ENCODE measurements at regions of chr2 and their contacts with region 1.

Region 1: GRCh38 chr2:196171248-196171871 is at the start of gene STK17B:
- DNase-seq: peak; percentile 96 to 99 (median 98)
- ATAC-seq: peak; percentile 57
- H3K4me3 ChIP-seq: peak within 1 kb of the TSS; percentile 91
- H3K4me3 Mint-ChIP-seq: peak within 1 kb of the TSS; percentile 99
- H3K27ac ChIP-seq: peak within 1 kb of the TSS; percentile 76 to 99
- H3K27ac Mint-ChIP-seq: peak within 1 kb of the TSS; percentile 85
- H3K4me1 ChIP-seq: peaks cover 40% of the 10 kb centered on the region
- H3K4me1 Mint-ChIP-seq: peaks cover 44% of the 10 kb centered on the region
- H3K27me3 ChIP-seq: no peaks in the 10 kb centered on the region
- H3K27me3 Mint-ChIP-seq: peaks cover 8% of the 10 kb centered on the region
- CTCF ChIP-seq: no peak
- total RNA-seq, gene STK17B: 645 to 648 TPM

Region 2: DNA sequence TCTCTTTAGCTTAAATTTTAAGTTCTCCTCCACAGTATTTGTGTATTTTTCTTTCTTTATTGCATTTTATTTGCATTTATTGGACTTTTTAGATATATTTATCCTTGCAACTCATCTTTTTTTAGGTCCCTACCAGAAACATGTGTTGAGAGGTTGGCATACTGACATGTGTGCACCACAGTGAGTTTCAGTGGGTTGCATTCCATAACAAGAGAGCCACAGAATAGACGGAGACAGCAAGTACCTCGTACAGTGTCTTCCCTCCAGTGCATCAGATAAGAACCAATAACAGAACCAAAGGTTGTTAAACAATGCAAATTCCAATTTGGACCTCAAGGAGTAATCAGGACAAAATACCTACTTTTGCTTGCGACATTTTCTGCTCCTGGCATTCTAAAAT is 214.6 kb before region 1 on chr2:
- CTCF ChIA-PET with region 1: no interaction called
- POLR2A ChIA-PET with region 1: no interaction called
- intact Hi-C with region 1: no loop called
- DNase-seq: no peak
- ATAC-seq: no peak
- H3K4me3 ChIP-seq: no peak overlapping the region
- H3K4me3 Mint-ChIP-seq: no peak overlapping the region
- H3K27ac ChIP-seq: no peak overlapping the region
- H3K27ac Mint-ChIP-seq: no peak overlapping the region
- H3K4me1 ChIP-seq: no peaks in the 10 kb centered on the region
- H3K4me1 Mint-ChIP-seq: no peaks in the 10 kb centered on the region
- H3K27me3 ChIP-seq: no peaks in the 10 kb centered on the region
- H3K27me3 Mint-ChIP-seq: peaks cover 4% of the 10 kb centered on the region
- CTCF ChIP-seq: no peak

Region 3: GRCh38 chr2:196119926-196120325 is 51.4 kb before region 1 on chr2:
- CTCF ChIA-PET with region 1: no interaction called
- POLR2A ChIA-PET with region 1: no interaction called
- intact Hi-C with region 1: no loop called
- DNase-seq: no peak
- ATAC-seq: no peak
- H3K4me3 ChIP-seq: no peak overlapping the region
- H3K4me3 Mint-ChIP-seq: no peak overlapping the region
- H3K27ac ChIP-seq: no peak overlapping the region
- H3K27ac Mint-ChIP-seq: no peak overlapping the region
- H3K4me1 ChIP-seq: no peaks in the 10 kb centered on the region
- H3K4me1 Mint-ChIP-seq: no peaks in the 10 kb centered on the region
- H3K27me3 ChIP-seq: no peaks in the 10 kb centered on the region
- H3K27me3 Mint-ChIP-seq: no peaks in the 10 kb centered on the region
- CTCF ChIP-seq: no peak

Region 4: DNA sequence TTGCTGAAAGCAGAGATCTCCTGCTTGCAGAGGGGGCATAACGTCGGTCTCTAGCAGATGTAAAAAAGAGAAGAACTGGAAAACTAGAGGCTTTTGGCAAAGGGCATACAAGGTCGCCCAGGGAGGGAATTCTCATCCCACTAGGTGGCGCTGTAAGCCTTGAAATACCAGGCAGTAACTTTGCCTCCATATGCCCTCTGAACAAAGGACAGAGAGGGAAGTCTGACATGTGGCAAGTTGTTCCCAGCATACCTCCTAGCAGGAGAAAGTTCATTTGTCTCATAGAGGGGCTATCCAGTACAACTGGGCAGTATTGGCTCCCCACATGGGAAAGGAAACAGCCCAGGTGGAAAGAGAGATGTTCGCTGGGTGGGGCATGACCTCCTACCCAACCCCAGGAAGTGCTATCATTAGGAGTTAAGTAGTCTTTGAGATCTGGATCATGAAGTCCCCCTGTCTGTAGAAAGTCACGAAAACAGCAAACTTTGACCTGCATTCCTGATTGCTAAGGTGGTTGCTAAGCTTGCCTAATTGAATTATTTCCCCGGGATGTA is 39.9 kb before region 1 on chr2:
- CTCF ChIA-PET with region 1: no interaction called
- POLR2A ChIA-PET with region 1: interaction called, 24 read pairs
- intact Hi-C with region 1: loop called in 1 of 2 experiments (anchors 5 kb)
- DNase-seq: peak in 12 of 14 experiments; percentile 33 to 81 (median 50)
- ATAC-seq: peak; percentile 28
- H3K4me3 ChIP-seq: no peak overlapping the region
- H3K4me3 Mint-ChIP-seq: peak overlapping the region; percentile 3
- H3K27ac ChIP-seq: peak overlapping the region in 1 of 2 donors; percentile 27
- H3K27ac Mint-ChIP-seq: peak overlapping the region; percentile 77
- H3K4me1 ChIP-seq: peaks cover 8% of the 10 kb centered on the region
- H3K4me1 Mint-ChIP-seq: peaks cover 23% of the 10 kb centered on the region
- H3K27me3 ChIP-seq: no peaks in the 10 kb centered on the region
- H3K27me3 Mint-ChIP-seq: no peaks in the 10 kb centered on the region
- CTCF ChIP-seq: peak; percentile 55

Region 5: DNA sequence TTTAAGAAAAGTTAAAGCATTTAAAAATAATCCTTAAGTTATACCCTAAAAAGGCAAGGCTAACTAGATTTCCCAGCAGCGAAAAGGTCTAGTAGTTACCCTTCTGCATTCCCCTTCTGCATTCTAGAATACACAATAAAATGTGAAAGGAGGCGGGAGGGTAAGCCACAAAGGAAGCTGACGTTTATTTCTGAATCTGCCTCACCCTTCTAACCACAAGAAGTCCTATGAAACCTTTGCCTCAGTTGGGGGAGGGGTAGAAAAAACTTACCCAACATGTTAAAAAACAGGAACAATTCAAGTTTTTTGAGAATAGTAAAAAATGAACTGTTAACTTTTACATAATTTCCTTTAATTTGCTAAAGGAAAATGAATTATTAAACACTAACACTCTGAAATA is 11.3 kb before region 1 on chr2:
- CTCF ChIA-PET with region 1: no interaction called
- POLR2A ChIA-PET with region 1: interaction called, 126 read pairs
- intact Hi-C with region 1: loop called in 1 of 2 experiments (anchors 1 kb)
- DNase-seq: peak in 9 of 14 experiments; percentile 21 to 94 (median 58)
- ATAC-seq: peak; percentile 54
- H3K4me3 ChIP-seq: peak overlapping the region; percentile 91
- H3K4me3 Mint-ChIP-seq: peak overlapping the region; percentile 86
- H3K27ac ChIP-seq: peak overlapping the region; percentile 80 to 88
- H3K27ac Mint-ChIP-seq: peak overlapping the region; percentile 85
- H3K4me1 ChIP-seq: peaks cover 32% of the 10 kb centered on the region
- H3K4me1 Mint-ChIP-seq: peaks cover 92% of the 10 kb centered on the region
- H3K27me3 ChIP-seq: no peaks in the 10 kb centered on the region
- H3K27me3 Mint-ChIP-seq: no peaks in the 10 kb centered on the region
- CTCF ChIP-seq: no peak

Region 6: DNA sequence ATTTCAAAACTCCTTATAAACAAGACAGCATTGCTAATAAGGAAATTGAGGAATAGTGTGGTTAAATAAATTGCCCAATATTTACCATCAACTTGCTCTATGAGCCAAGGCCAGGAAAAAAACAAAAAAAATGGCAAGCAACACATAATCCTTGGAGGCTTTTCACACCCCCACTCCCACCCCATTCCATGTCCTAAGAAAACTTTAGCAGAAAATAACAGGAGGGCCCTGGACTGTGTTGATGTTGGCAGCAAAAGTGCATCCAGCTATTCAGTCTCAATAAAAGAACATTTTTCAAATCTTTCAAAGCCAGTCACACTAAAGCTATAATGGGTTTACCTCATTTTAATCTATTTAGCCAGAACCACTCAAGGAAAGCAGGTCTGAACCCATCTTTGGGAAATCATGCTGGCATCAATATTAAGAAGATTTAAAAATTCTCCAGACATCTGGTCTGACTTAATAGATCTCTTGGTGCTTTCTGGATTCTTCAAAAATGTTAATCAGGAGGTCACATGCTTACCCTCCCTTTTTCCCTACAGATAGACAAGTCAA is 34.6 kb after region 1 on chr2:
- CTCF ChIA-PET with region 1: interaction called, 9 read pairs
- POLR2A ChIA-PET with region 1: interaction called, 75 read pairs
- intact Hi-C with region 1: loop called in 1 of 2 experiments (anchors 1 kb)
- DNase-seq: no peak
- ATAC-seq: no peak
- H3K4me3 ChIP-seq: no peak overlapping the region
- H3K4me3 Mint-ChIP-seq: no peak overlapping the region
- H3K27ac ChIP-seq: no peak overlapping the region
- H3K27ac Mint-ChIP-seq: peak overlapping the region; percentile 43
- H3K4me1 ChIP-seq: peaks cover 34% of the 10 kb centered on the region
- H3K4me1 Mint-ChIP-seq: peaks cover 45% of the 10 kb centered on the region
- H3K27me3 ChIP-seq: no peaks in the 10 kb centered on the region
- H3K27me3 Mint-ChIP-seq: no peaks in the 10 kb centered on the region
- CTCF ChIP-seq: no peak

Region 7: GRCh38 chr2:196239622-196240587 is 68.5 kb after region 1 on chr2:
- CTCF ChIA-PET with region 1: interaction called, 4 read pairs
- POLR2A ChIA-PET with region 1: interaction called, 60 read pairs
- intact Hi-C with region 1: loop called in 1 of 2 experiments (anchors 1 kb)
- DNase-seq: peak; percentile 57 to 95 (median 73)
- ATAC-seq: peak; percentile 80
- H3K4me3 ChIP-seq: peak overlapping the region; percentile 13
- H3K4me3 Mint-ChIP-seq: peak overlapping the region; percentile 83
- H3K27ac ChIP-seq: peak overlapping the region; percentile 54 to 76
- H3K27ac Mint-ChIP-seq: peak overlapping the region; percentile 95
- H3K4me1 ChIP-seq: peaks cover 57% of the 10 kb centered on the region
- H3K4me1 Mint-ChIP-seq: peaks cover 79% of the 10 kb centered on the region
- H3K27me3 ChIP-seq: no peaks in the 10 kb centered on the region
- H3K27me3 Mint-ChIP-seq: no peaks in the 10 kb centered on the region
- CTCF ChIP-seq: no peak

Region 8: DNA sequence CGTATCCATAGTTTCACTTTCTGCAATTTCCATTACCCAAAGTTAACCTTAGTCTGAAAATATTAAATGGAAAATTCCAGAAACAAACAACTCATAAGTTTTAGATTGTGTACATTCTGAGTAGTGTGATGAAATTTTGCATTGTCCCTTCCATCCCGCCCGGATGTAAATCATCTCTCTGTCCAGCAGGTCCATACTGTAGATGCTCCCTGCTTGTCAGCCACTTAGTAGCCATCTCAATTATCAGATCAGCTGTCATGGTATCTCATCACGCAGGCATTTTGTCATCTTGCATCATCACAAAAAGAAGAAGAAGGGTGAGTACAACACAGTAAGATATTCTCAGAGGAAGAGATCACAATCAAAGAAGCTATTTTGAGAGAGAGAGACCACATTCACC is 185.0 kb after region 1 on chr2:
- CTCF ChIA-PET with region 1: no interaction called
- POLR2A ChIA-PET with region 1: no interaction called
- intact Hi-C with region 1: no loop called
- DNase-seq: no peak
- ATAC-seq: no peak
- H3K4me3 ChIP-seq: no peak overlapping the region
- H3K4me3 Mint-ChIP-seq: no peak overlapping the region
- H3K27ac ChIP-seq: no peak overlapping the region
- H3K27ac Mint-ChIP-seq: no peak overlapping the region
- H3K4me1 ChIP-seq: no peaks in the 10 kb centered on the region
- H3K4me1 Mint-ChIP-seq: no peaks in the 10 kb centered on the region
- H3K27me3 ChIP-seq: no peaks in the 10 kb centered on the region
- H3K27me3 Mint-ChIP-seq: peaks cover 13% of the 10 kb centered on the region
- CTCF ChIP-seq: no peak

Region 9: GRCh38 chr2:197191177-197191939 is 1020.0 kb after region 1 on chr2:
- CTCF ChIA-PET with region 1: no interaction called
- POLR2A ChIA-PET with region 1: no interaction called
- intact Hi-C with region 1: loop called in 1 of 2 experiments (anchors 10 kb)
- DNase-seq: peak in 3 of 14 experiments; percentile 83 to 84 (median 84)
- ATAC-seq: peak; percentile 59
- H3K4me3 ChIP-seq: no peak overlapping the region
- H3K4me3 Mint-ChIP-seq: peak overlapping the region; percentile 52
- H3K27ac ChIP-seq: peak overlapping the region; percentile 62 to 64
- H3K27ac Mint-ChIP-seq: peak overlapping the region; percentile 95
- H3K4me1 ChIP-seq: peaks cover 48% of the 10 kb centered on the region
- H3K4me1 Mint-ChIP-seq: peaks cover 82% of the 10 kb centered on the region
- H3K27me3 ChIP-seq: no peaks in the 10 kb centered on the region
- H3K27me3 Mint-ChIP-seq: no peaks in the 10 kb centered on the region
- CTCF ChIP-seq: peak; percentile 84